Panc1 (cell line): ENCODE measurements at regions of chr15 and their contacts with region 1.

Region 1: DNA sequence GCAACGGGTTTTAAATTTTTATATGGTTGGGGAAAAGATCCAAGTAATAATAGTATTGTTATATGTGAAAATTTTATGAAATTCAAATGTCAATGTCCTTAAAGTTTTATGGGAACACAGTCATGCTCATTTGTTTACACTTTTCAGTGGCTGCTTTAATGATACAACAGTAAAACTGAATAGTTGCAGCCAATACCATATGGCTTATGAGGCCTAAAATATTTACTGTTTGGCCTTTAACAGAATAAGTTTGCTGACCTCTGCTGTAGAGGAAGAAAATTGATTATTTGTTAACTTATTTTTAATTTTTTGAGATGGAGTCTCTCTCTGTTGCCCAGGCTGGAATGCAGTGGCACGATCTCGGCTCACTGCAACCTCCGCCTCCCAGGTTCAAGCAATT is 44.7 kb downstream of the USP50 start:
- DNase-seq: no peak
- ATAC-seq: no peak
- H3K4me3 ChIP-seq: no peak overlapping the region
- H3K27ac ChIP-seq: no peak overlapping the region
- H3K4me1 ChIP-seq: no peaks in the 10 kb centered on the region
- H3K27me3 ChIP-seq: no peaks in the 10 kb centered on the region
- CTCF ChIP-seq: no peak

Region 2: GRCh38 chr15:50321680-50322210 is 180.1 kb before region 1 on chr15:
- CTCF ChIA-PET with region 1: no interaction called
- POLR2A ChIA-PET with region 1: no interaction called
- in situ Hi-C with region 1: no loop called
- intact Hi-C with region 1: no loop called
- DNase-seq: no peak
- ATAC-seq: no peak
- H3K4me3 ChIP-seq: no peak overlapping the region
- H3K27ac ChIP-seq: no peak overlapping the region
- H3K4me1 ChIP-seq: no peaks in the 10 kb centered on the region
- H3K27me3 ChIP-seq: no peaks in the 10 kb centered on the region
- CTCF ChIP-seq: no peak

Region 3: DNA sequence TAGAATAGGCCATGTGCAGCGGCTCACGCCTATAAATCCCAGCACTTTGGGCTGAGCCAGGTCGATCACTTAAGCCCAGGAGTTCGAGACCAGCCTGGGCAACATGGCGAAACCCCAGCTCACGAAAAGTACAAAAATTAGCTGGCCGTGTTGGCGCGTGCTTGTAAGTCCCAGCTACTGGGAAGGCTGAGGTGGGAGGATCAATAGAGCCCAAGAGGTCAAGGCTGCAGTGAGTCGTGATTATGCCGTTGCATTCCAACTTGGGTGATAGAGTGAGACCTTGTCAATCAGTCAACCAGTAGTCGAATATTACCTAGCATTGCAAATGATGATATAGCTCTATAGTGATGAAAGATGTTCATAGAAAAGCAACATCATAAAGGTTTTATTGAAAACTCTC is 25.7 kb before region 1 on chr15:
- CTCF ChIA-PET with region 1: no interaction called
- POLR2A ChIA-PET with region 1: interaction called, 12 read pairs
- in situ Hi-C with region 1: no loop called
- intact Hi-C with region 1: no loop called
- DNase-seq: no peak
- ATAC-seq: no peak
- H3K4me3 ChIP-seq: no peak overlapping the region
- H3K27ac ChIP-seq: no peak overlapping the region
- H3K4me1 ChIP-seq: no peaks in the 10 kb centered on the region
- H3K27me3 ChIP-seq: no peaks in the 10 kb centered on the region
- CTCF ChIP-seq: no peak

Region 4: DNA sequence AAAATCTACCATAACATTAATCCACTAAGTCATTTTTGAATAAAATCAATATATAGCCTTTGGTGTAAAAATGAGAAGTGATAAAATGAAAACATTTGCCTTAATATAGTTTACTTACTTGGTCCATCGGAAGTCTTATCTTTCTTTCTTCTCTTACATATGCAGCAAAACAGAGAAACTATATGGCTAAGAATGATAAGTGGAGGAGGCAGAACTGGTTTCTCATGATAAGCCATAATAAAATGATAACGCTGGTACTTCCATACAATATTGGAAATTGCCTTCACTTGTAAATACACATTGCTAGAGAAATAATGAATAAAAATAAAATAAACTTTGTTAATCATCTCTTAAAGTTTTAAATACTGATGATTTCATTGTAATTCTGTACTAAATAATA is 92.5 kb after region 1 on chr15:
- CTCF ChIA-PET with region 1: no interaction called
- POLR2A ChIA-PET with region 1: no interaction called
- in situ Hi-C with region 1: no loop called
- intact Hi-C with region 1: no loop called
- DNase-seq: no peak
- ATAC-seq: no peak
- H3K4me3 ChIP-seq: no peak overlapping the region
- H3K27ac ChIP-seq: no peak overlapping the region
- H3K4me1 ChIP-seq: no peaks in the 10 kb centered on the region
- H3K27me3 ChIP-seq: no peaks in the 10 kb centered on the region
- CTCF ChIP-seq: no peak